A673 (cell line): ENCODE measurements at regions of chr19 and their contacts with region 1.

Region 1: DNA sequence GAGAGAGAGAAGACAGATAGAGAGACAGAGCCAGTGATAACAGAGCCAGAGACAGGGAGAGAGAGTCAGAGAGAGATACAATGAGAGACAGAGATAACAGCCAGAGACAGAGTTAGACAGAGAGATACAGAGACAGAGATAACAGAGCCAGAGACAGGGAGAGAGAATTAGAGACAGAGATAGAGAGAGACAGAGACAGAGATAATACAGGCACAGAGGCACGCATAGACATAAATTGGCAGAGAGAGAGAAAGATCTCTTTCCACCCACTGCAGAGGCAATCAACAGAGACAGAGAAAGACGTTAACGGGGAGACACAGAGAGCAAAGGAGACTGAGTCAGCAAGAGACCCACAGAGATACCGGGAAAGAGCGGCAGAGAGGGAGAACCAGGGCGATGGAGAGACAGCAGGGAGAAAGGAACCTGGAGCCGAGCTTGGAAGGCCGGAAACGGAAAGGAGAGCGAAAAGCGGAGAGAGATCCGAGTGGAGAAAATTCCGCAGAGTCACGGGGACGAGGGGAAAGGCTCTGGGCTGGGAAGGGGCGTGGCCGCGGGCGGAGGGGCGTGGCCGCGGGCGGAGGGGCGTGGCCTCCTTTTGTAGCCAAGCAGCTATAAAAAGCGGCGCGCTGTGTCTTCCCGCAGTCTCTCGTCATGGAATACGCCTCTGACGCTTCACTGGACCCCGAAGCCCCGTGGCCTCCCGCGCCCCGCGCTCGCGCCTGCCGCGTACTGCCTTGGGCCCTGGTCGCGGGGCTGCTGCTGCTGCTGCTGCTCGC is at the start of gene TNFSF9:
- DNase-seq: peak; percentile 92
- H3K4me3 ChIP-seq: peak within 1 kb of the TSS; percentile 94
- H3K27ac ChIP-seq: peak within 1 kb of the TSS; percentile 95
- H3K4me1 ChIP-seq: peaks cover 32% of the 10 kb centered on the region
- H3K27me3 ChIP-seq: no peaks in the 10 kb centered on the region
- CTCF ChIP-seq: no peak
- total RNA-seq, gene TNFSF9: 10.0 and 11.1 TPM in 2 replicates

Region 2: GRCh38 chr19:6362027-6362350 is 168.6 kb before region 1 on chr19:
- CTCF ChIA-PET with region 1: no interaction called
- POLR2A ChIA-PET with region 1: interaction called, 11 read pairs
- intact Hi-C with region 1: no loop called
- DNase-seq: no peak
- H3K4me3 ChIP-seq: peak overlapping the region; percentile 89
- H3K27ac ChIP-seq: peak overlapping the region; percentile 92
- H3K4me1 ChIP-seq: no peaks in the 10 kb centered on the region
- H3K27me3 ChIP-seq: no peaks in the 10 kb centered on the region
- CTCF ChIP-seq: no peak

Region 3: DNA sequence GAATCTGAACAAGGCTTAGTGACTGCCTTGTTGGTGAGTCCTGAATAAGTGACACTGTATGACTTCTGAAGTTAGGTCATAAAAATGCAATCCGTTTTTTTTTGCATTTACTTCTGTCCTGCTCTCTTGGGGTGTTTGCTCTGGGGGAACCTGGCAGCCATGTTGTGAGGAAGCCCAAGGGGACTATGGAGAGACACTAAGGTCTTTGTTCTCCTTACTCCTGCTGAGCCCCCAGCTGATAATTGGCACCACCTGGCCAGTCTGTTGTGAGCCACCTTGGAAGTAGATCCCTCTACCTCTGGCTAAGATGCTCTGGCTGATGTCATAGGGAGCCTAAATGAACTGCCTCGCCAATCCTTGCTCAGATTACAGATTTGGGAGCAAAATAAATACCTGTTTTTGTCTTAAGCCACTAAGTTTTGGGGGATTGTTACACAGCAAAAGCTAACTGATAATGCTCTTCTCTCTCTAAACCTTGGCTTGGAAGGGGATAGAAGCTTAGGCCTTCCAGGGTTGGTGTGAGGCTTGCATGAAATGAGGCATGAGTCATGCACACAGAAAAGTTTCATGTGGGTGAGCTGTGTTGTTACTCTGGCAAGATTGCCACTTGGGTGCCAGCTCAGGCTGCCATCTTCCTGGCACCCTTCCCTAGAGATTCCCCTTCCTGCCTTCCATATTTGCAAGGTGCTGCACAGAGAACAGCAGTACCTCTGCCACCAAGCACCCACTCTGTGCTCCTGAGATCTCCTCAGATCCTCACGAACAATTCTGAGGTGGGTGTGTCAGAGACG is 38.6 kb before region 1 on chr19:
- CTCF ChIA-PET with region 1: no interaction called
- POLR2A ChIA-PET with region 1: no interaction called
- intact Hi-C with region 1: no loop called
- DNase-seq: no peak
- H3K4me3 ChIP-seq: no peak overlapping the region
- H3K27ac ChIP-seq: no peak overlapping the region
- H3K4me1 ChIP-seq: no peaks in the 10 kb centered on the region
- H3K27me3 ChIP-seq: no peaks in the 10 kb centered on the region
- CTCF ChIP-seq: no peak

Region 4: GRCh38 chr19:6608940-6609339 is 78.4 kb after region 1 on chr19:
- CTCF ChIA-PET with region 1: no interaction called
- POLR2A ChIA-PET with region 1: interaction called, 10 read pairs
- intact Hi-C with region 1: no loop called
- DNase-seq: no peak
- H3K4me3 ChIP-seq: no peak overlapping the region
- H3K27ac ChIP-seq: no peak overlapping the region
- H3K4me1 ChIP-seq: no peaks in the 10 kb centered on the region
- H3K27me3 ChIP-seq: no peaks in the 10 kb centered on the region
- CTCF ChIP-seq: no peak

Region 5: GRCh38 chr19:6651965-6652804 is 121.6 kb after region 1 on chr19:
- CTCF ChIA-PET with region 1: interaction called, 12 read pairs
- POLR2A ChIA-PET with region 1: interaction called, 3 read pairs
- intact Hi-C with region 1: no loop called
- DNase-seq: no peak
- H3K4me3 ChIP-seq: no peak overlapping the region
- H3K27ac ChIP-seq: no peak overlapping the region
- H3K4me1 ChIP-seq: no peaks in the 10 kb centered on the region
- H3K27me3 ChIP-seq: no peaks in the 10 kb centered on the region
- CTCF ChIP-seq: no peak